ENCODE measurements at regions of chr2 and their contacts with region 1.

Region 1: DNA sequence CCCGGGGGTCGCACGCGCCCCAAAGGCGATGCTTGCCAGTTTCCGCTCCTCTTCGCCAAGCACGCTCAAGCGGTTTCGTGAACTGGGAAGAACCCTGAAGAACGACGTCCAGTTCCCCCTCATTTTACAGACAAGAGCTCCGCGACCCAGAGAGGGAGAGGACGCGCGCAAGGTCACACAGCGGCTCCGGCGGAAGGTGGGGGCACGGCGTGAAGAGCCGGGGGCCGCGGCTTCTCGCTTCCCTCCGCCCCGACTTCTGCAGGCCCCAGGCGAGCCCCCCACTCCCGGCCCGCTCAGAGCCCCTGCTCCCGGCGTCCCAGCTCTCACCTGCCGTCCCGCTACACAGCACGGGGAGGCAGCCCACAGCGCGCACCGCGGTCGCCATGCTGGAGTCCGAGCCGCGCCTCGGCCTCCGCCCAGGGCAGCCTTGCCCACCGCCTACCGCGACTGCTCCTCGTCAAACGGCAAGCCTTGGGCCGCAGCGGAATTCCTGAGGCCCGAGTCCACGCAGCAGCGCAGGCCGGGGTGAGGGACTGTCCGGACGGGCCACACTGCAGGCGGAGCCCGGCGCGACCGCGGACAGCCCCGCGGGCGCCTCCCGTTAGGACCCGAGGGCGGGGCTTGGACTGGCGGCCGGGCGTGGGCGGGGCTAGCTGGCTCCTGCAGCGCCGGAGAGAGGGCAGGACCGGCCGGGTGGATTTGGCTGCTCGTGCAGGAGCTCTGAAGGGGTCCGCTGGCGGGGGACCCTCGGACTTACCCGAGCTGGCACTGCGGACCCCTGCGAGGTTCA is at the start of gene MRPS5:
- DNase-seq: peak; percentile 82 to 90
- H3K4me3 ChIP-seq: peak within 1 kb of the TSS; percentile 79 to 88
- H3K27ac ChIP-seq: peak within 1 kb of the TSS; percentile 83 to 93
- H3K4me1 ChIP-seq: peaks cover 0 to 38% (median 24%) of the 10 kb centered on the region in 4 donors
- H3K27me3 ChIP-seq: no peaks in the 10 kb centered on the region
- CTCF ChIP-seq: no peak

Region 2: GRCh38 chr2:95159690-95160449 is 38.3 kb after region 1 on chr2 and contains the start of gene ZNF514:
- intact Hi-C with region 1: loop called (anchors 5 kb)
- DNase-seq: peak; percentile 77 to 90
- H3K4me3 ChIP-seq: peak within 1 kb of the TSS; percentile 82 to 87
- H3K27ac ChIP-seq: peak within 1 kb of the TSS; percentile 90 to 92
- H3K4me1 ChIP-seq: peaks cover 0 to 24% (median 17%) of the 10 kb centered on the region in 4 donors
- H3K27me3 ChIP-seq: no peaks in the 10 kb centered on the region
- CTCF ChIP-seq: no peak